Right cardiac atrium (tissue), 5 donors: ENCODE measurements at regions of chr17 and their contacts with region 1.

Region 1: DNA sequence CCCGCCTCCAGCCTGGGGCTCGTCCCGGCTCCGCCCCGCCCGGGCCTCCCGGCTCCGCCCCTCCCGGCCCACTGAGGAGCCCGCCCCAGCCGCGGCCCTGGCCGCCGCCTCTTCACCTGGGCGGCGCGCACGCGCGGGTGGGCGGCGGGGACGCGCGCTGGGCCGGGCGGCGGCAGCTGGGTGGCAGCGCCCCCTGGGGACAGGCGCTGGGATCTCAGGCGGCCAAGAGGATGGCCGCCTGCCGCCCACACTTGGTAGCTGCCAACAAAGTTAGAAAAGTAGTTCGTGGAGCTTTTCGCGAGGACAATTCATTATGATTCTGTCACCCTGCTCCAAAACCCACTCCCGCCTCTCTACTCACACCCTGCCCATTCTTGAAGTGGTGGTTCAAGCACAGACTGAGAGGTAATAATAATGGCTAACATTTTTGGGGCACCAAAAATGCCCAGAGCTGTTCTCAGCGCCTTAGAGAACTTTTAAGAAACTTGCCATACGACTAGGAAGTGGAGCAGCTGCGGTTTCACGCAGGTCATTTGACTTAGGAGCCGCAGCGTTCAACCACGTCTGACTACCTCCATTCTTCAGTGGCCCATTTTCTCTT is 340 bp upstream of the MYO1D start:
- DNase-seq: peak; percentile 92 to 98 (median 97)
- ATAC-seq: peak; percentile 99
- H3K4me3 ChIP-seq: peak overlapping the region; percentile 91
- H3K27ac ChIP-seq: peak overlapping the region; percentile 80
- H3K4me1 ChIP-seq: no peaks in the 10 kb centered on the region
- H3K27me3 ChIP-seq: no peaks in the 10 kb centered on the region

Region 2: GRCh38 chr17:32927724-32928585 is 50.7 kb after region 1 on chr17 and contains the start of gene TMEM98:
- intact Hi-C with region 1: loop called in 1 of 4 experiments (anchors 10 kb)
- DNase-seq: peak; percentile 32 to 77 (median 73)
- ATAC-seq: peak; percentile 65 to 73
- H3K4me3 ChIP-seq: peak within 1 kb of the TSS; percentile 90
- H3K27ac ChIP-seq: no peak within 1 kb of the TSS
- H3K4me1 ChIP-seq: no peaks in the 10 kb centered on the region
- H3K27me3 ChIP-seq: no peaks in the 10 kb centered on the region
- total RNA-seq, gene TMEM98: 29.7 to 42.7 (median 39.4) TPM